PC-3 (cell line): ENCODE measurements at regions of chr2 and their contacts with region 1.

Region 1: GRCh38 chr2:163778044-163778781 is 42.4 kb upstream of the FIGN start:
- DNase-seq: peak; percentile 97
- ATAC-seq: peak; percentile 71
- H3K4me3 ChIP-seq: no peak overlapping the region
- H3K27ac ChIP-seq: peak overlapping the region; percentile 47
- H3K4me1 ChIP-seq: peaks cover 68% of the 10 kb centered on the region
- H3K27me3 ChIP-seq: no peaks in the 10 kb centered on the region
- CTCF ChIP-seq: no peak

Region 2: GRCh38 chr2:162538954-162539353 is 1239.3 kb before region 1 on chr2:
- CTCF ChIA-PET with region 1: no interaction called
- POLR2A ChIA-PET with region 1: no interaction called
- intact Hi-C with region 1: no loop called
- DNase-seq: no peak
- ATAC-seq: no peak
- H3K4me3 ChIP-seq: no peak overlapping the region
- H3K27ac ChIP-seq: no peak overlapping the region
- H3K4me1 ChIP-seq: no peaks in the 10 kb centered on the region
- H3K27me3 ChIP-seq: peaks cover 9% of the 10 kb centered on the region; the same call in 1 of the 2 replicates
- CTCF ChIP-seq: no peak

Region 3: DNA sequence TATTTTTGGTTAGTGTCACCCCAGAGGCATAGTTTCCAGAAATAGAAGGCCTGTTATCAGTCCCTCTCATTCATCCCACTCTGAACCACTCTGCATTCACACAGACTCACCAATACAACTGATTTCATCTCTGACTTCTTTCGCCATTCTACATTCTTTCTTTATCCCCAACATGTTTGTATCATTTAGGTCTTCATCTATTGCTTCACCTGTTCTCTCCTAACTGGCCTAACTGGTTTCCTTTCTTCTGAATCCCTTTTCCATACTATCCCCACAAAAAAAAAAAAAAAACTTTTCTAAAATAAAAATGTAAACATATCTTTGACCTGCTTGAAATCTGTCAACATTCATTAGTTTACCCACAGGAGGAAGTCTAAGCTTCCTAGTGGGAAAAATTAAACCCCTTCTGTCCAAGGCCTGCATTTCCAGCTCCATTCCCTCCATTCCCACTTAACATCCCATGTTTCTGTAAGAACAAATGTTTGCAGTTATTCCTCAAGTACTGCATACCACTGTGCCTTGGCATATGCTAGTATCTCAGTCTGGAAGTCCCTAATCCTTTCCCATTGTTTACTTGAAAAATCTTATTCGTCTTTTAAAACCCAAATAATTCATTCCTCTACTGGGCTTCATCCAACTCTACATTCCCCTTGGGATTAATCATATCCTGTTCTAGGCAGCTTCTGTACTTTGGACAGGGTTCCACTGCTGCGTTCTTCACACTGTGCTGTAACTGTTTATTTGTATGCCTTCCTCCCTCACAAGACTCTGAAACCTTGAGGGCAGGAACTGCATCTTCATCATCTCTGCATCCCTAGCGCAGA is 110.9 kb before region 1 on chr2:
- CTCF ChIA-PET with region 1: no interaction called
- POLR2A ChIA-PET with region 1: no interaction called
- intact Hi-C with region 1: loop called (anchors 5 kb)
- DNase-seq: peak; percentile 88
- ATAC-seq: peak; percentile 96
- H3K4me3 ChIP-seq: no peak overlapping the region
- H3K27ac ChIP-seq: peak overlapping the region; percentile 32; the same call in 1 of the 2 replicates
- H3K4me1 ChIP-seq: peaks cover 40% of the 10 kb centered on the region
- H3K27me3 ChIP-seq: no peaks in the 10 kb centered on the region
- CTCF ChIP-seq: no peak

Region 4: GRCh38 chr2:163682692-163683091 is 95.5 kb before region 1 on chr2:
- CTCF ChIA-PET with region 1: no interaction called
- POLR2A ChIA-PET with region 1: no interaction called
- intact Hi-C with region 1: loop called (anchors 5 kb)
- DNase-seq: peak; percentile 74
- ATAC-seq: peak; percentile 77
- H3K4me3 ChIP-seq: no peak overlapping the region
- H3K27ac ChIP-seq: no peak overlapping the region
- H3K4me1 ChIP-seq: peaks cover 11% of the 10 kb centered on the region
- H3K27me3 ChIP-seq: no peaks in the 10 kb centered on the region
- CTCF ChIP-seq: peak; percentile 53

Region 5: DNA sequence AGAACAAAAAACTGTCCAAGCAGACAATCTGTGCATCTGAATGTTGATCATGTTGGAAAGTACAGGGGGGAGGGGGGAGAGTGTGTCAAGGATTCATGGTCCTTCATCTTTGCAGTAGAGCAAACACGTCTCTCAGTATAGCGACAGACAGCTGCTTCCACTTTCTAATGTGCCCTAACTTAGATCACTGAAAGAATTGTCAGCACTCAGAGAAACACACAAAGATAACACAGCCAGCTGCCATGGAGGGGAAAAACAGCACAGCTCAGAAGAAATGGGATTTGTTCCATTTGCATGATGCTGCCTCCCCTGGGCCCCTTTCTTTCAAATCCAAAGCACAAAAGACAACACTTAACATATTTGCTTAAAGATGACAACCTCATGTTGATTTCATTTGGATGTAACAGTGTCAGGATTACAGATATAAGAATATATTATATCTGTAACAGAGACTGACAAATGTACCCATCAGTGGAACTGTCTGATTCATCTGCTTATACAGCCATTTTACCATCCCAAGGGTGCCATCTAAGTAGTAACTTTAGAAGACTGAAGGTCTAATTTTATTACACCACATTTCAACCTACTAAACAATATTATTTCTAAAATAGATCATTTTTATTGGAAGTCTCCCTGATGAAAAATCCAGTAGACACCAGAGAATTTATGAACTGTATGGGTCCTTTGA is 60.1 kb before region 1 on chr2:
- CTCF ChIA-PET with region 1: no interaction called
- POLR2A ChIA-PET with region 1: no interaction called
- intact Hi-C with region 1: no loop called
- DNase-seq: no peak
- ATAC-seq: no peak
- H3K4me3 ChIP-seq: no peak overlapping the region
- H3K27ac ChIP-seq: no peak overlapping the region
- H3K4me1 ChIP-seq: no peaks in the 10 kb centered on the region
- H3K27me3 ChIP-seq: no peaks in the 10 kb centered on the region
- CTCF ChIP-seq: no peak

Region 6: GRCh38 chr2:163849996-163850395 is 71.8 kb after region 1 on chr2:
- CTCF ChIA-PET with region 1: no interaction called
- POLR2A ChIA-PET with region 1: no interaction called
- intact Hi-C with region 1: no loop called
- DNase-seq: peak; percentile 26
- ATAC-seq: no peak
- H3K4me3 ChIP-seq: no peak overlapping the region
- H3K27ac ChIP-seq: no peak overlapping the region
- H3K4me1 ChIP-seq: peaks cover 3% of the 10 kb centered on the region; the same call in 1 of the 2 replicates
- H3K27me3 ChIP-seq: no peaks in the 10 kb centered on the region
- CTCF ChIP-seq: no peak

Region 7: DNA sequence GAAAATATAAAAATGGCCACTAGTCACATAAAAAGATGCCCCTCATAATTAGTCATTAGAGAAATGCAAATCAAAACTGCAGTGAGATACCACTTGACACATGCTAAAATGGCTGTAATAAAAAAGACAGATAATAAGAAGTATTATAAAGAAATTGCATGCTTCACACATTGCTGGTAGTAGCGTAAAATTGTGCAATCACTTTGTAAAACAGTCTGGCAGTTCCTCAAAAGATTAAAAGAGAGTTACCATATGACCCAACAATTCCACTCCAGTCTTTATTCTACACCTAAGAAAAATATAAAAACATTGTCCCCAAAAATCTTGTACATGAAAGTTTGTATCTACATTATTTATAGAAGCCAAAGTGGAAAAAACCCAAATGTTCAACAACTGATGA is 128.2 kb after region 1 on chr2:
- CTCF ChIA-PET with region 1: no interaction called
- POLR2A ChIA-PET with region 1: no interaction called
- intact Hi-C with region 1: no loop called
- DNase-seq: no peak
- ATAC-seq: no peak
- H3K4me3 ChIP-seq: no peak overlapping the region
- H3K27ac ChIP-seq: no peak overlapping the region
- H3K4me1 ChIP-seq: no peaks in the 10 kb centered on the region
- H3K27me3 ChIP-seq: no peaks in the 10 kb centered on the region
- CTCF ChIP-seq: no peak